Mammary epithelial cell (primary cell): ENCODE measurements at regions of chr19 and their contacts with region 1.

Region 1: GRCh38 chr19:50969411-50969756 is at the start of gene KLK6:
- DNase-seq: peak; percentile 95
- H3K4me3 ChIP-seq: no peak within 1 kb of the TSS
- H3K27ac ChIP-seq: peak within 1 kb of the TSS; percentile 83
- H3K4me1 ChIP-seq: peaks cover 25% of the 10 kb centered on the region
- H3K27me3 ChIP-seq: no peaks in the 10 kb centered on the region
- CTCF ChIP-seq: no peak
- total RNA-seq, gene KLK6: 12.7 to 175 TPM

Region 2: DNA sequence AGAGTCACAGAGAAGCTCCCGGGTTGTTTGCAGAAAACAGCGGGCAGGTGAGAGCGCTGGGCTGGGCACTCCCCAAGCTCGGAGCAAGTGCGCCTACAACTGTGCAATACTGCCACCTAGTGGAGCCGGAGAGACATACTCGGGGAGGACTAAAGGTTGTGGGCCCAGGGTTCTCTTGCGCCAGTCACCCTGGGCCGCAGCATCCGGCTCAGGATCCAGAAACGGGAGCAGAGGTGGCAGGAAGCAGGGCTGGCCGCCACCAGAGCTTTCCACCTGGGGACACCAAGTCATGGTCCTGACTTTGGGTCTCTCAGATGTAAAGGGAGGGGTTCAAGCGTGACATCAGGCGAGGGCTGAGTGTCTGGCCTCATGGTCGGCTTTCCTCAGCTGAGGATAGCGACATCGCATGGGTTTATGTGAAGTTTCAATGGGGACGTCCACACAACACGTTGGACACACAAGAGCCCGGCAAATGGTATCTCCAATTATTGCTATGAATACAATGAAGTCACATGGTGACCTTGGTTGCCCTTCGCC is 47.0 kb before region 1 on chr19:
- CTCF ChIA-PET with region 1: no interaction called
- dilution Hi-C with region 1: no loop called
- in situ Hi-C with region 1: no loop called
- intact Hi-C with region 1: no loop called
- DNase-seq: peak; percentile 77
- H3K4me3 ChIP-seq: no peak overlapping the region
- H3K27ac ChIP-seq: no peak overlapping the region
- H3K4me1 ChIP-seq: peaks cover 22% of the 10 kb centered on the region
- H3K27me3 ChIP-seq: no peaks in the 10 kb centered on the region
- CTCF ChIP-seq: peak; percentile 72 to 94

Region 3: GRCh38 chr19:50994129-50994528 is 24.7 kb after region 1 on chr19:
- CTCF ChIA-PET with region 1: no interaction called
- dilution Hi-C with region 1: no loop called
- in situ Hi-C with region 1: no loop called
- intact Hi-C with region 1: loop called (anchors 2 kb)
- DNase-seq: peak; percentile 61
- H3K4me3 ChIP-seq: no peak overlapping the region
- H3K27ac ChIP-seq: peak overlapping the region; percentile 98
- H3K4me1 ChIP-seq: peaks cover 29% of the 10 kb centered on the region
- H3K27me3 ChIP-seq: no peaks in the 10 kb centered on the region
- CTCF ChIP-seq: no peak

Region 4: DNA sequence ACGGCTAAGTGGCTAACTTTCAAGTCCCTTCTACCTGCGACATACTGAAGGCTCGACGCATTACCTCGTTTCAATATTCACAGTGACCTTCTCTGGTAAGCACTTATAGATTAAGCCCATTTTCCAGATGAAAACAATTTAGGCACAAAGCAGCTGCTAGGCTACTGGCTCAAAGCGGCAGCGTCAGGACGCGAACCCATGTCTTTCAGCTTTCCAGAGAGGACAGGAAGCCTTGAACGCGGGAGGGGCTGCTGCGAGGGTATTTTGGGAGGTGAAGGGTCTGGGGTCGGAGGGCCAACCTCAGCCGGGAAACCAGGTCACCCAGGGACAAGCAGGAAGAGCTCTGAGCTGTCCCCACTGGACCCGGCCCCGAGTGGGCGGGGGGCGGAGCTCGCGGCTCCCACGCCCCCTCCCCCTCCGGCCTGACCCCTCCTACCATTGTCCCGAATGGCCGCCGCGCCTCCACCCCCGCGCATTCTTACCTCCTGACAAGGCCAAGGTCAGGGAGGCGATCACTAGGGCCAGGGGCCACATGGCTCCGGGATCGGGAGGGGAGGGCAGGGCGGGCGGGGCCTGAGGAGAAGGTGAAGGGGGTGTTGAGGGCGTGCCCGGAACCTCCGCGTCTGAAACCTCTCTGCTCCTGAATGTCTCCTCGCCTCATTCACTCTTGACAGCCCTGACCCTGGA is 95.3 kb after region 1 on chr19 and contains the start of gene KLK13:
- CTCF ChIA-PET with region 1: no interaction called
- dilution Hi-C with region 1: no loop called
- in situ Hi-C with region 1: no loop called
- intact Hi-C with region 1: no loop called
- DNase-seq: peak; percentile 12
- H3K4me3 ChIP-seq: peak within 1 kb of the TSS in 2 of 3 experiments; percentile 27 to 31
- H3K27ac ChIP-seq: no peak within 1 kb of the TSS
- H3K4me1 ChIP-seq: peaks cover 9% of the 10 kb centered on the region
- H3K27me3 ChIP-seq: no peaks in the 10 kb centered on the region
- CTCF ChIP-seq: no peak
- total RNA-seq, gene KLK13: 0.28 to 0.83 TPM

Region 5: GRCh38 chr19:51136851-51137551 is 167.6 kb after region 1 on chr19:
- CTCF ChIA-PET with region 1: no interaction called
- dilution Hi-C with region 1: no loop called
- in situ Hi-C with region 1: no loop called
- intact Hi-C with region 1: no loop called
- DNase-seq: no peak
- H3K4me3 ChIP-seq: no peak overlapping the region
- H3K27ac ChIP-seq: no peak overlapping the region
- H3K4me1 ChIP-seq: no peaks in the 10 kb centered on the region
- H3K27me3 ChIP-seq: peaks cover 6% of the 10 kb centered on the region
- CTCF ChIP-seq: no peak